ENCODE measurements at regions of chr19 and their contacts with region 1.

Region 1: GRCh38 chr19:11766597-11767591 is at the start of gene ZNF441:
- DNase-seq: peak; percentile 87 to 96
- H3K4me3 ChIP-seq: peak within 1 kb of the TSS; percentile 74
- H3K27ac ChIP-seq: no peak within 1 kb of the TSS
- H3K4me1 ChIP-seq: peaks cover 9% of the 10 kb centered on the region; the same call in 1 of the 2 replicates
- H3K27me3 ChIP-seq: no peaks in the 10 kb centered on the region
- CTCF ChIP-seq: no peak
- total RNA-seq, gene ZNF441: 1.6 and 1.7 TPM in 2 replicates

Region 2: DNA sequence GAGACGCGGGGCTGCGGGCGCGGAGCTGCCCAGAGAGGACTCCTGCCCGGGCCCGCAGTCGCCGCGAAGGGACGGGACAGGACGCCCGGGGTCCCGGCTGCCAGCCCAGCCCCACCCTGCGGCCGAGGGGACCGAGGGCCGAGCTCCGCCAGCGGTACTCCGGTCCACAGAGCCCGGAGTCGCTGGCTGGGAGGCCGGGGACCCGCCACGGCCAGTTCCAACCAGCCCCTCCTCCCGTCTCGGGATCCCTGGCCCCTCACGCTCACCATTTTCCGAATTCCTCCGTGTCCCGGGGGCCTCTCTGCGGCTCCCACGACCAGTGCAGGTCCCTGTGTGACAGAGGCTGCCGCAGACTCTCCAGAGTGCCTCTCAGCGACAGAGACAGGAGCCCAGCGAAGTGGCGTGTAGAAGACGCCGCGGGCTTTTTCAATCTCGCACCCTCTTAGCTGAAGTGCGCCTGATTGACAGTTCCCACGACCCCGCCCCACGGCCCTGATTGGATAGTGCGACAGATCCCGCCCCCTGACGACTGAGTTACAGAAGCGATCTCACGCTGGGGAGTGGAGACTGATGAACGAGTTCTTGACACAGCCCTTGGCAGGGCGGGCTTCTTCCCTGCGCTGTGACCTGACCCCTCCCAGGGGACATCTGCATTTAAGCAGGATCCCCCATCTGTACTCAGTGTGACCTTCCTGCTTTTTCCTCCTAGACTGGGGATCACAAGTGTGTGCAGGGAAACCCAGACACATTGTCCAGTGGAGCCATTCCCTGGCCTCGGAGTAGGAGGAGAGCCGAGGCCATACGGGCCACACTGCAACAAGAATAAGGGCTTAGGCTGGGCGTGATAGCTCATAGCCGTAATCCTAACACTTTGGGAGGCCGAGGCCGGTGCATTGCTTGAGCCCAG is 72.1 kb before region 1 on chr19:
- CTCF ChIA-PET with region 1: no interaction called
- POLR2A ChIA-PET with region 1: no interaction called
- intact Hi-C with region 1: loop called (anchors 5 kb)
- DNase-seq: peak; percentile 93 to 94
- H3K4me3 ChIP-seq: peak overlapping the region; percentile 79
- H3K27ac ChIP-seq: no peak overlapping the region
- H3K4me1 ChIP-seq: 0 out of 2 replicates have a peak, but pooled peaks cover 9% of the 10 kb centered on the region
- H3K27me3 ChIP-seq: no peaks in the 10 kb centered on the region
- CTCF ChIP-seq: no peak; the same call in 1 of the 2 replicates

Region 3: GRCh38 chr19:11738746-11739620 is 27.9 kb before region 1 on chr19 and contains the start of gene ZNF823:
- CTCF ChIA-PET with region 1: no interaction called
- POLR2A ChIA-PET with region 1: no interaction called
- intact Hi-C with region 1: loop called (anchors 1 kb)
- DNase-seq: peak; percentile 99
- H3K4me3 ChIP-seq: peak within 1 kb of the TSS; percentile 85
- H3K27ac ChIP-seq: peak within 1 kb of the TSS; percentile 89
- H3K4me1 ChIP-seq: peaks cover 31% of the 10 kb centered on the region
- H3K27me3 ChIP-seq: no peaks in the 10 kb centered on the region
- CTCF ChIP-seq: no peak
- total RNA-seq, gene ZNF823: 6.7 and 7.4 TPM in 2 replicates

Region 4: GRCh38 chr19:12333162-12334159 is 566.6 kb after region 1 on chr19 and contains the start of gene ZNF563:
- CTCF ChIA-PET with region 1: no interaction called
- POLR2A ChIA-PET with region 1: no interaction called
- intact Hi-C with region 1: no loop called
- DNase-seq: peak; percentile 92 to 96
- H3K4me3 ChIP-seq: peak within 1 kb of the TSS; percentile 56
- H3K27ac ChIP-seq: no peak within 1 kb of the TSS
- H3K4me1 ChIP-seq: no peaks in the 10 kb centered on the region
- H3K27me3 ChIP-seq: peaks cover 8% of the 10 kb centered on the region; the same call in 1 of the 2 replicates
- CTCF ChIP-seq: no peak
- total RNA-seq, gene ZNF563: 1.1 and 1.8 TPM in 2 replicates